ENCODE measurements at regions of chr17 and their contacts with region 1.

Region 1: GRCh38 chr17:76737082-76737675 is at the start of gene SRSF2:
- DNase-seq: peak; percentile 98 to 99 (median 98)
- ATAC-seq: peak; percentile 88 to 94 (median 91)
- H3K4me3 ChIP-seq: peak within 1 kb of the TSS; percentile 71 to 100 (median 94)
- H3K27ac ChIP-seq: peak within 1 kb of the TSS; percentile 97 to 100 (median 99)
- H3K4me1 ChIP-seq: peaks cover 5 to 78% (median 48%) of the 10 kb centered on the region in 12 donors
- H3K27me3 ChIP-seq: no peaks in the 10 kb centered on the region
- CTCF ChIP-seq: no peak
- POLR2A ChIP-seq: peak; percentile 90 to 99
- total RNA-seq, gene SRSF2: 67.0 to 155 (median 79.5) TPM

Region 2: GRCh38 chr17:76681222-76682137 is 55.7 kb before region 1 on chr17:
- intact Hi-C with region 1: loop called in 1 of 10 experiments (anchors 10 kb)
- DNase-seq: peak; percentile 69 to 82 (median 73)
- ATAC-seq: peak; percentile 52 to 71 (median 60)
- H3K4me3 ChIP-seq: peak overlapping the region in 2 of 12 donors; percentile 1 to 3
- H3K27ac ChIP-seq: peak overlapping the region; percentile 36 to 99 (median 89)
- H3K4me1 ChIP-seq: peaks cover 14 to 61% (median 51%) of the 10 kb centered on the region in 12 donors
- H3K27me3 ChIP-seq: no peaks in the 10 kb centered on the region
- CTCF ChIP-seq: peak; percentile 53 to 84 (median 74)
- POLR2A ChIP-seq: no peak

Measured in heart left ventricle (tissue), 16 donors.